B cell (primary cell): ENCODE measurements at regions of chr7 and their contacts with region 1.

Region 1: DNA sequence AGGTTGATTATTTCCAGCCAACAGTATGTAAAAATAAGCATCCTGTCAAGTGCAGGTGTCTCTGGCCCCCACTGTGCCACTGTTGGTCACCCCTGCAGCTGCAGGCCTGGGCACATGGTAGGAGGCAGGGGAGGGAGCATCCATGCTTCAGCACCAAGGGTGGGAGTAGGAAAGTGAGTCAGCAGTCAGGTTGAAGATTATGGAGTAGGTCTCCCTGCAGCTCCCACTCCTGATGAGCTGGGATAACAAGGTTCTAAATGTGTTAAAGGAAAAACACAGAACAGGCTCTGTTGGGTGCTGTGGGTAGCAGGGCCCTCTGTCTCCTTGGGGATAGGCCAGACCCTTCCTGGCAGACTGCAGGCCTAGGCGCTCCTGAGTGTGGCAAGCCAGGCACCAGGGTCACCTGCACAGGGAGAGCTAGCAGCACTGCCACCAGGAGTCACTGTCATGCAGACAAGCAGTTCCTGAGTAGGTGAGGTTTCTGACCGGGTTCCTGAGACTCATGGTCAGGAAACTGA is 59.3 kb downstream of the NUDCD3 start:
- DNase-seq: peak; percentile 23
- ATAC-seq: peak; percentile 51
- H3K4me3 ChIP-seq: no peak overlapping the region
- H3K4me3 Mint-ChIP-seq: no peak overlapping the region
- H3K27ac ChIP-seq: no peak overlapping the region
- H3K27ac Mint-ChIP-seq: no peak overlapping the region
- H3K4me1 ChIP-seq: peaks cover 3 to 11% of the 10 kb centered on the region in 2 donors
- H3K4me1 Mint-ChIP-seq: peaks cover 36% of the 10 kb centered on the region
- H3K27me3 ChIP-seq: no peaks in the 10 kb centered on the region
- H3K27me3 Mint-ChIP-seq: no peaks in the 10 kb centered on the region
- CTCF ChIP-seq: no peak

Region 2: GRCh38 chr7:44477063-44477830 is 46.1 kb after region 1 on chr7:
- CTCF ChIA-PET with region 1: interaction called, 4 read pairs
- POLR2A ChIA-PET with region 1: no interaction called
- intact Hi-C with region 1: loop called (anchors 1 kb)
- DNase-seq: peak; percentile 76
- ATAC-seq: peak; percentile 96
- H3K4me3 ChIP-seq: no peak overlapping the region
- H3K4me3 Mint-ChIP-seq: no peak overlapping the region
- H3K27ac ChIP-seq: no peak overlapping the region
- H3K27ac Mint-ChIP-seq: peak overlapping the region; percentile 24
- H3K4me1 ChIP-seq: peaks cover 0 to 4% of the 10 kb centered on the region in 2 donors
- H3K4me1 Mint-ChIP-seq: peaks cover 13% of the 10 kb centered on the region
- H3K27me3 ChIP-seq: no peaks in the 10 kb centered on the region
- H3K27me3 Mint-ChIP-seq: no peaks in the 10 kb centered on the region
- CTCF ChIP-seq: peak; percentile 94